Activated T-helper 1 cell treated with anti-CD3 and anti-CD28 coated beads, Interleukin-12 subunit alpha, Interleukin-12 subunit beta, Interleukin-2, Interleukin-4 antibody, amounts not matched to agents 30 ng/mL and 10 ng/mL and 1 ng/mL, durations not matched to agents 14 hours and 24 hours and 36 hours (primary cell): ENCODE measurements at regions of chr1 and their contacts with region 1.

Region 1: GRCh38 chr1:174968750-174969244 is 30.9 kb upstream of the CACYBP start:
- DNase-seq: peak; percentile 41
- H3K4me3 Mint-ChIP-seq: peak overlapping the region; percentile 70
- H3K27ac Mint-ChIP-seq: peak overlapping the region; percentile 96
- H3K4me1 Mint-ChIP-seq: peaks cover 72% of the 10 kb centered on the region
- H3K27me3 Mint-ChIP-seq: no peaks in the 10 kb centered on the region

Region 2: GRCh38 chr1:173476664-173477285 is 1492.0 kb before region 1 on chr1:
- intact Hi-C with region 1: loop called (anchors 10 kb)
- DNase-seq: peak; percentile 74
- H3K4me3 Mint-ChIP-seq: peak overlapping the region; percentile 92
- H3K27ac Mint-ChIP-seq: peak overlapping the region; percentile 93
- H3K4me1 Mint-ChIP-seq: peaks cover 65% of the 10 kb centered on the region
- H3K27me3 Mint-ChIP-seq: no peaks in the 10 kb centered on the region

Region 3: GRCh38 chr1:174022080-174022975 is 946.5 kb before region 1 on chr1 and contains the start of gene RC3H1:
- intact Hi-C with region 1: loop called (anchors 1 kb)
- DNase-seq: peak; percentile 84
- H3K4me3 Mint-ChIP-seq: peak within 1 kb of the TSS; percentile 99
- H3K27ac Mint-ChIP-seq: peak within 1 kb of the TSS; percentile 96
- H3K4me1 Mint-ChIP-seq: peaks cover 42% of the 10 kb centered on the region
- H3K27me3 Mint-ChIP-seq: peaks cover 2% of the 10 kb centered on the region
- total RNA-seq, gene RC3H1: 47.1 and 49.5 TPM in 2 replicates

Region 4: GRCh38 chr1:174800216-174800851 is 168.5 kb before region 1 on chr1:
- intact Hi-C with region 1: loop called (anchors 1 kb)
- DNase-seq: peak; percentile 4
- H3K4me3 Mint-ChIP-seq: no peak overlapping the region
- H3K27ac Mint-ChIP-seq: no peak overlapping the region
- H3K4me1 Mint-ChIP-seq: peaks cover 15% of the 10 kb centered on the region
- H3K27me3 Mint-ChIP-seq: no peaks in the 10 kb centered on the region

Region 5: GRCh38 chr1:174938281-174939007 is 30.4 kb before region 1 on chr1:
- intact Hi-C with region 1: loop called (anchors 1 kb)
- DNase-seq: no peak
- H3K4me3 Mint-ChIP-seq: peak overlapping the region; percentile 42
- H3K27ac Mint-ChIP-seq: peak overlapping the region; percentile 79
- H3K4me1 Mint-ChIP-seq: peaks cover 25% of the 10 kb centered on the region
- H3K27me3 Mint-ChIP-seq: no peaks in the 10 kb centered on the region

Region 6: DNA sequence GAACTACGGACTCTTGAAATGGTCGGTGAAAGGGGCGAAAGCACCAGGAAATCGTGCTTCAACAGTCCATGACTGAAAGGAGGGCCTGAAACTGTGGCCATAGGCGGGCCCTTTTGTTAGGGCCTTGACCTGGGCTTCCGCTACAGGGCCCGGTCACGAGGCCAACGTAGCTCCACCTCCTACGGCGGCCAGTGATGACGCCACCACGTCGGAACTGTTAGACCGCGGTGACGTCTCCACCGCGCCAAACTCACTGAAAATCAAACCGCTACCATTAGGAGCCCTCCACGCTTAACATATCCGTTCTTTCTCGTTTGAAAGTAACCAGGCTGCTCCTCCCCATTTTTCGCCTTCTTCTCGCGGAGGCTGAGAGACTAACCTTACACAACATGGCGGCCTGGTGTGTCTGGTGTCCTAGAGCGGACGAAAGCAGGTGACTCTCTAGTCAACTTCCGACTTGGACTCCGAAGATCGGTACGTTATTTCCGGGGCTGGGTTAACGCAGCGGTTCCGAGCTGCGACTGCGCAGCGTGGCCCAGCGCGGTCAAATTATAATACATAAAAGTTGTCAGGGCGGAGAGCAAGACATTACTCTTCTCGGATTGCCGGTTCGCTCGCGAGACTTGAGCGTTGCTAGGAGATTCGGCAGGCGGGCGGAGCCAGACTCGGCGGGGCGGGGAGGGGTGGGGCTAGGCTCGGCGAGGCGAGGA is 30.6 kb after region 1 on chr1:
- intact Hi-C with region 1: loop called (anchors 1 kb)
- DNase-seq: peak; percentile 96
- H3K4me3 Mint-ChIP-seq: no peak overlapping the region
- H3K27ac Mint-ChIP-seq: no peak overlapping the region
- H3K4me1 Mint-ChIP-seq: peaks cover 29% of the 10 kb centered on the region
- H3K27me3 Mint-ChIP-seq: no peaks in the 10 kb centered on the region

Region 7: GRCh38 chr1:175208773-175209492 is 240.1 kb after region 1 on chr1:
- intact Hi-C with region 1: loop called (anchors 5 kb)
- DNase-seq: peak; percentile 60
- H3K4me3 Mint-ChIP-seq: peak overlapping the region; percentile 81
- H3K27ac Mint-ChIP-seq: peak overlapping the region; percentile 98
- H3K4me1 Mint-ChIP-seq: peaks cover 67% of the 10 kb centered on the region
- H3K27me3 Mint-ChIP-seq: peaks cover 2% of the 10 kb centered on the region